Natural killer cell (primary cell): ENCODE measurements at regions of chr6 and their contacts with region 1.

Region 1: GRCh38 chr6:35786810-35787209 is 6.0 kb downstream of the CLPSL1 start:
- DNase-seq: no peak
- ATAC-seq: no peak
- H3K4me3 ChIP-seq: no peak overlapping the region
- H3K4me3 Mint-ChIP-seq: no peak overlapping the region
- H3K27ac ChIP-seq: no peak overlapping the region
- H3K27ac Mint-ChIP-seq: no peak overlapping the region
- H3K4me1 ChIP-seq: no peaks in the 10 kb centered on the region
- H3K4me1 Mint-ChIP-seq: no peaks in the 10 kb centered on the region
- H3K27me3 ChIP-seq: peaks cover 11% of the 10 kb centered on the region
- H3K27me3 Mint-ChIP-seq: peaks cover 38 to 43% of the 10 kb centered on the region in 2 donors
- CTCF ChIP-seq: no peak

Region 2: GRCh38 chr6:35797837-35798526 is 11.2 kb after region 1 on chr6:
- intact Hi-C with region 1: loop called (anchors 1 kb)
- DNase-seq: no peak
- ATAC-seq: no peak
- H3K4me3 ChIP-seq: no peak overlapping the region
- H3K4me3 Mint-ChIP-seq: no peak overlapping the region
- H3K27ac ChIP-seq: no peak overlapping the region
- H3K27ac Mint-ChIP-seq: no peak overlapping the region
- H3K4me1 ChIP-seq: no peaks in the 10 kb centered on the region
- H3K4me1 Mint-ChIP-seq: no peaks in the 10 kb centered on the region
- H3K27me3 ChIP-seq: no peaks in the 10 kb centered on the region
- H3K27me3 Mint-ChIP-seq: peaks cover 11 to 13% of the 10 kb centered on the region in 2 donors
- CTCF ChIP-seq: no peak